ENCODE measurements at regions of chr4 and their contacts with region 1.

Region 1: DNA sequence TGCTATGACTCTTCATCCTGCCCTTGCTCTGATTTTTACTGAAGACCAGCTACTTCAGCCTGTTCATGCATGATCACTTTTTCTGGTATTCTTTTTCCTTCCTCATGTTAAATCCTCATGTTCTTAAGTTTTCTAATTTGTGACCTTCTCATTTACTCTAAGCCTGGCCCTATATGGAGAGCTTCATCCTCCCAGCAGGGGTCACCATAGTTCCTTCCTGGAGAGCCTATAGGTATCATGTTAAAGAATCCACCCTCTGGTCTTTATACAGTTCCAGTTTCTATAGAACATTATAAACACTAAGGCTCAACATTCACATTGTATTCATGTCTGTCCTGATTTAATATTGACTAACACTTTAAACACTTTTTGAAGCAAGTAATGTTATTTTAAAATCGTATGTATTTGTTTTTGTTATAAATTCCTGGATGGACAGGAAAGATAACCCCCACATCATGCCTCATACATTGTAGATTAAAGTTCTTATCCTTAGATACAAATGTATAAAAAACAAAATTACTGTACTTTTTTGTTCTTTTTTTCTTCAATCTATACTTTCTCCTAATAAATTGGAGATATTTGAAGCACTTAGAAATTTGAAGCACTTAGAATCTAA is 53.8 kb upstream of the OTUD4 start:
- DNase-seq: peak; percentile 88
- H3K4me3 ChIP-seq: no peak overlapping the region
- H3K27ac ChIP-seq: no peak overlapping the region
- H3K4me1 ChIP-seq: peaks cover 11% of the 10 kb centered on the region
- CTCF ChIP-seq: peak; percentile 100

Region 2: DNA sequence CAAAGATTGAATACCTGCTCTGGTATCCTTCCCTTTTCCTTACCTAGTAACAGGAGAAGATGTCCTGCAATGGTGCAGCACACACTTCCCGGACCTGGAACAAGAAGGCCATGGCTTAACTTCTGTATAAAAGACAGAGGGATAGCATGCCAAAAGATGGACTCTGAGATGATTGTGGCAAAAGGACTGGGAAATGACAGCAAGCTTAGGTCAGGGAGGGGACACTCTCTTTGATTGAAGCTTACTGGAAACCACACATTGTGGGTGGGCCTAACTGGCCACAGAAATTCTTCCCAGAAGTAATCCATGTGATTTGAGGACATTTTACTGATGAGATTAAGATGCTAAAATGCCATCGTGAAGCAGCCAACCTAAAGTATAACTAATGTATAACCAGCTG is 17.2 kb after region 1 on chr4:
- CTCF ChIA-PET with region 1: no interaction called
- POLR2A ChIA-PET with region 1: no interaction called
- intact Hi-C with region 1: no loop called
- DNase-seq: no peak
- H3K4me3 ChIP-seq: no peak overlapping the region
- H3K27ac ChIP-seq: no peak overlapping the region
- H3K4me1 ChIP-seq: no peaks in the 10 kb centered on the region
- CTCF ChIP-seq: no peak

Region 3: GRCh38 chr4:145557720-145558119 is 323.5 kb after region 1 on chr4:
- CTCF ChIA-PET with region 1: interaction called, 4 read pairs
- POLR2A ChIA-PET with region 1: interaction called, 4 read pairs
- intact Hi-C with region 1: loop called (anchors 1 kb)
- DNase-seq: peak; percentile 79
- H3K4me3 ChIP-seq: no peak overlapping the region
- H3K27ac ChIP-seq: no peak overlapping the region
- H3K4me1 ChIP-seq: peaks cover 21% of the 10 kb centered on the region
- CTCF ChIP-seq: peak; percentile 99

Region 4: DNA sequence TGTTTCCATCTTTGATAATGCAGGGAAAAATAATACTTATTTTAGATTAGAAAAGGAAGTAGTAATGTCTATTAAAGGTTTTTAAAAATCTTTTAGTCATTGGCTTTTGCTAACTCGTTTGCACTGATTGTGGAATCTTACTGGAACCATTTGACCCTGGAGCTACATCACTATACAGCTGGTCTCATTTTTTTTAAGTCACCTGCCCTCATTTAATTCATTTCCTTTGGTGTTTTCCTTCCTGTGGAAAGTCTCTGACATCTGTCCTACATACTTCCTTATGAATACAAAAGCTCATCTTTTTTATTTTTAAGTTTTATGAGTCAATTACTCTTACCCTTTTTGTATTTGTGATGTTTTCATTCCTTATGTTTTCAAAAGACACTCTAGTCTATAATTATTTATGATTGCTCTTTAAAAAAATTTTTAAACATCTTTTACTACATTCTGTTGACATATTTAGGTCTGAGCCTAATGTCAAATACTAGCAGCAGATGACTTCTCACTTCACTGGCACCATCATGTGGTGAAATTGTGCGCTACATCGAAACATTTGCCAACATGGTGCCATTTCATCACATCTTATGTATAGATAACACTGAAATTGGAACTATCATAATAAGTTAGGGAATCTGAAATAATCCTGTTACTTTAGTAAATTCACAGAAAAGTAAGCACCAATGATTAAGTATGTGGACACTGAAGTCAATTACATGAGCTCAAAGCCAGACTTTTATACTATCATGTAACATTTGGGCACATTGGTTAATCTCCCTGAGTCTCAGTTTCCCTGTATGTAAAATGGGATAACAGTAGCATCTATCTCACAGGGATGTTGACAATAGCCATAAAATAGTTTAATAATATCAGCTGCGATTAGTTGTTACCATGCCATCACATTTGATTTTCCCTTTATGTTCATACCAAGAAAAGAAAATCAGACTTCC is 375.6 kb after region 1 on chr4:
- CTCF ChIA-PET with region 1: interaction called, 8 read pairs
- POLR2A ChIA-PET with region 1: no interaction called
- intact Hi-C with region 1: loop called (anchors 1 kb)
- DNase-seq: peak; percentile 85
- H3K4me3 ChIP-seq: no peak overlapping the region
- H3K27ac ChIP-seq: peak overlapping the region; percentile 5
- H3K4me1 ChIP-seq: peaks cover 9% of the 10 kb centered on the region
- CTCF ChIP-seq: peak; percentile 99

Measured in OCI-LY7 (cell line).